SK-N-SH (cell line): ENCODE measurements at regions of chr2 and their contacts with region 1.

Region 1: GRCh38 chr2:192162392-192163042 is 32.2 kb downstream of the TMEFF2 start:
- DNase-seq: peak; percentile 12
- H3K4me3 ChIP-seq: no peak overlapping the region; a peak in 1 of 4 replicates
- H3K27ac ChIP-seq: no peak overlapping the region
- H3K4me1 ChIP-seq: no peaks in the 10 kb centered on the region
- H3K27me3 ChIP-seq: no peaks in the 10 kb centered on the region
- CTCF ChIP-seq: peak; percentile 99
- EP300 ChIP-seq: no peak
- RAD21 ChIP-seq: peak; percentile 95

Region 2: GRCh38 chr2:191800874-191801273 is 361.6 kb before region 1 on chr2:
- CTCF ChIA-PET with region 1: interaction called, 306 read pairs
- POLR2A ChIA-PET with region 1: no interaction called
- DNase-seq: no peak
- H3K4me3 ChIP-seq: no peak overlapping the region
- H3K27ac ChIP-seq: no peak overlapping the region
- H3K4me1 ChIP-seq: peaks cover 0 to 6% of the 10 kb centered on the region in 2 experiments; a peak in 2 of 4 replicates
- H3K27me3 ChIP-seq: no peaks in the 10 kb centered on the region
- CTCF ChIP-seq: no peak
- EP300 ChIP-seq: no peak
- RAD21 ChIP-seq: no peak

Region 3: DNA sequence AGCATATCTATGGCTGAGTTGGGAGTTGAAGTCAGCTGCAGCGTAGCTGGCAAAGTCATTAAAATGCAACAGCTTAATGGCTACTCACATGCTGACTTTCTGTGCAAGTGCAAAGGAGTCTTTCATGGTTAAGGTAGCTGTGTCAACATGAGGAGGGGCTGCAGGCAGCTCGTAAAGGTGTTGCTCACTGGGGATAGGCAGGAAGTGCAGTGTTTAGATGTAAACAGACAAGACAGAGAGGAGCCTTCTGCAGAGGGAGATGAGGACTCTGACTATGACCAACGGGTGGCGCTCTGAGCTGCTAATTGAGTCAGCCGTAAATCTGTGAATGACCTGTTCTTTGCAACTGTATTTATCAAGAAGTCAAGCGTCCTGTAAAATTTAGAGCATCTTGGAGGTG is 293.3 kb before region 1 on chr2:
- CTCF ChIA-PET with region 1: interaction called, 20 read pairs
- POLR2A ChIA-PET with region 1: no interaction called
- DNase-seq: no peak
- H3K4me3 ChIP-seq: no peak overlapping the region
- H3K27ac ChIP-seq: no peak overlapping the region
- H3K4me1 ChIP-seq: peaks cover 0 to 17% of the 10 kb centered on the region in 2 experiments; a peak in 2 of 4 replicates
- H3K27me3 ChIP-seq: no peaks in the 10 kb centered on the region
- CTCF ChIP-seq: peak; percentile 41
- EP300 ChIP-seq: no peak
- RAD21 ChIP-seq: peak; percentile 40; the same call in 1 of the 2 replicates

Region 4: DNA sequence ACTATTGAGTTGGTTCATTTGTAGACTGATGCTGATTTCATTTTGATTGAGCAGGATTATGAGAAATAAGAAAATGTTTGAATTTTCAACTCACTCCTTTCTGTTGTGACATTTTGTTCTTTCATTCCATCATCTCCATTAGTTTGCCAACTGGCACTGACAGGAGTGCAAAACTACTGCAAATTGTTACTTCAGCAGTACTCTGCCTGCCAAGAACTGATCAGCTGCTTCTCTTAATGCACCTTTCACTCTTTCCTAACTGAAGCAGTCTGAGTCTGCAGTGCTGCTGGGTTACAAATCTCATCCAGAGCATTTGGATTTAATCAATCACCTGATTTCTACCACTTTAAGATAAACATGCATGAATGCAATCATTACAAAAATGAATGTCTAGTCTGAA is 38.7 kb before region 1 on chr2:
- CTCF ChIA-PET with region 1: interaction called, 19 read pairs
- POLR2A ChIA-PET with region 1: no interaction called
- DNase-seq: no peak
- H3K4me3 ChIP-seq: no peak overlapping the region
- H3K27ac ChIP-seq: peak overlapping the region; percentile 49 to 69; a peak in 2 of 4 replicates
- H3K4me1 ChIP-seq: peaks cover 3 to 5% of the 10 kb centered on the region in 2 experiments; a peak in 2 of 4 replicates
- H3K27me3 ChIP-seq: no peaks in the 10 kb centered on the region
- CTCF ChIP-seq: no peak
- EP300 ChIP-seq: no peak
- RAD21 ChIP-seq: no peak

Region 5: GRCh38 chr2:192148620-192149321 is 13.7 kb before region 1 on chr2:
- CTCF ChIA-PET with region 1: interaction called, 35 read pairs
- POLR2A ChIA-PET with region 1: no interaction called
- DNase-seq: no peak
- H3K4me3 ChIP-seq: no peak overlapping the region
- H3K27ac ChIP-seq: peak overlapping the region; percentile 39 to 82; a peak in 3 of 4 replicates
- H3K4me1 ChIP-seq: peaks cover 0 to 24% of the 10 kb centered on the region in 2 experiments; a peak in 3 of 4 replicates
- H3K27me3 ChIP-seq: no peaks in the 10 kb centered on the region
- CTCF ChIP-seq: peak; percentile 21; the same call in 1 of the 2 replicates
- EP300 ChIP-seq: no peak
- RAD21 ChIP-seq: no peak

Region 6: DNA sequence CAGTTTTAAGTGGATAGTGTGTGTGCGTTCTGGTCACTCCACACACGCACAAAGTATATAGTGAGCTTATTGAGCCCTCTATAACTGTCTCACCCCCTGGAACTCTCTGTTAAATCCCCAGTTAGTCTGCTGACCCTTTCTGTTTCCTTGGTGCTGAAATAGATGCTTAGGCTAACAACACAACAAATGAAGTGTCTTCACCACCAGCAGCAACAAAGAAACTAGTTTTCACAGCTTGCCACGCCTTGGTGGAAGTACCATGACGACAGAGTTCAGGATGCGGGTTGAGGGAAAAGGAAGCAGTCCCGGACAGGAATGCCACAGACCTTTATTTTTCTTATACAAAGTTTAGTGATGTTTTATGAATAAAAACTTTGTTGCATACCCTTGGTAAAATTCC is 235.8 kb after region 1 on chr2:
- CTCF ChIA-PET with region 1: no interaction called
- POLR2A ChIA-PET with region 1: no interaction called
- DNase-seq: no peak
- H3K4me3 ChIP-seq: no peak overlapping the region
- H3K27ac ChIP-seq: no peak overlapping the region
- H3K4me1 ChIP-seq: no peaks in the 10 kb centered on the region
- H3K27me3 ChIP-seq: no peaks in the 10 kb centered on the region
- CTCF ChIP-seq: no peak
- EP300 ChIP-seq: no peak
- RAD21 ChIP-seq: no peak